A549 (cell line): ENCODE measurements at regions of chr5 and their contacts with region 1.

Region 1: DNA sequence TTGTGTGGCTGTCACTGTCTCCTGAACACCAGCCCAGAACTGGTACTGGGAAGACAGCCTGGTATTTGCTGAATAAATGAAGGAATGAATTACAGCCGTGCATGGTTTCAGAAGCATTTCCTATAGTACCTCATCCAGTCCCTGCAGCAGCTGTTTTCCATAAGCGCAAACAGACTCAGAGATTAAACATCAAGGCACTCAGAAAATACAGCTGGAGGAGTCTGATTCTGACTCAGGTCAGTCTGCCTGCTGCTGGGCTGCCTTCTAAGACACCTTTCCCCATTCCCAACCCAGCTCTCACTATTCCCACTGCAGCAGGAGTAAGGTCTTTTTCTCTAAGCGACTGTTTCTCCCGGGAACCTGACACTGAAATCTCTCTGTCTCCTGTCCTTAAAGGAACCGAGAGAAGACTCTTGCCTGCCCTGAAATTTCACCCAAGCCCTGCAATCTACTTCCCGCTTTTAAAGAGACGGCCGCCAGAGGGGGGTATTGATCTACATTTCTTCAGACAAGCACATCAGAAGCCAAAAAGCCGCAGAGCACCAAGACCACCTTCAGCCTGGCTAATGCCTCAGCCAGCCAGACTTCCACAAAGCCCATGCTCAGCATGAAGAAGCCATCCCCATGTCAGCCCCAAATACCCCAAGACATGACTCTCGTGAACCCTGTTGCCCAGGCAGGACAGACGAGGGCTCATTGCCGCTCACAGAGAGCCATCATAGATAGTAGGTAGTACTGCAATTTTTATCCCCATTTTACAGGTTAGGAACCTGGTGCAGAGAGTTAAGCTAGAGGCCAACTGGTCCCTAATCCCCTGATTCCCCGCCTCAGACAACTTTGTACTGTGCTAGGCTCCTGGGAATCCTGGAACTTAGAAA is 5.4 kb upstream of the FOXI1 start:
- DNase-seq: peak; percentile 54 to 78
- ATAC-seq: peak; percentile 80 to 90
- H3K4me3 ChIP-seq: no peak overlapping the region
- H3K27ac ChIP-seq: peak overlapping the region in 1 of 2 experiments; percentile 67; a peak in 3 of 6 replicates
- H3K4me1 ChIP-seq: peaks cover 7% of the 10 kb centered on the region; the same call in 1 of the 3 replicates
- CTCF ChIP-seq: peak; percentile 89
- EP300 ChIP-seq: no peak
- POLR2A ChIP-seq: no peak
- RAD21 ChIP-seq: peak; percentile 95 to 98

Region 2: GRCh38 chr5:169956756-169957155 is 143.5 kb before region 1 on chr5:
- CTCF ChIA-PET with region 1: no interaction called
- POLR2A ChIA-PET with region 1: no interaction called
- DNase-seq: no peak
- ATAC-seq: no peak
- H3K4me3 ChIP-seq: no peak overlapping the region
- H3K27ac ChIP-seq: no peak overlapping the region
- H3K4me1 ChIP-seq: no peaks in the 10 kb centered on the region
- CTCF ChIP-seq: no peak
- EP300 ChIP-seq: no peak
- POLR2A ChIP-seq: no peak
- RAD21 ChIP-seq: no peak

Region 3: DNA sequence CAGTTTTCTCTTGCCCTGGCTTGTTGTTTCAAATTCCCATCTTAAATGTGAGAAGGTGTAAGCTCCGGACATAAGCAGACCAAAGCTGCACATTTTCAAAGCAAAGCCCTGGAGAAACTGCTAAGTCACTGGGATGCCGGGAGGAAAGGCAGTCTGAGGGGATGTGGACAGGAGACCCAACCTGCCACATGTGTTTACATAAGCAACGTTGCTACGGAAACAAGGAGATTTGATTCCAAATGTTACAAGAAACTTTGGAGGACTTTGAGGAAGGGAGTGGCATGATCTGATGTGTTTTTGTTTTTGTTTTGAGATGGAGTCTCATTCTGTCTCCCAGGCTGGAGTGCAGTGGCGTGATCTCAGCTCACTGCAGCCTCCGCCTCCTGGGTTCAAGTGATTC is 94.3 kb before region 1 on chr5:
- CTCF ChIA-PET with region 1: no interaction called
- POLR2A ChIA-PET with region 1: no interaction called
- DNase-seq: peak in 1 of 2 experiments; percentile 35
- ATAC-seq: no peak
- H3K4me3 ChIP-seq: no peak overlapping the region
- H3K27ac ChIP-seq: no peak overlapping the region
- H3K4me1 ChIP-seq: no peaks in the 10 kb centered on the region
- CTCF ChIP-seq: no peak
- EP300 ChIP-seq: no peak
- POLR2A ChIP-seq: no peak
- RAD21 ChIP-seq: no peak

Region 4: DNA sequence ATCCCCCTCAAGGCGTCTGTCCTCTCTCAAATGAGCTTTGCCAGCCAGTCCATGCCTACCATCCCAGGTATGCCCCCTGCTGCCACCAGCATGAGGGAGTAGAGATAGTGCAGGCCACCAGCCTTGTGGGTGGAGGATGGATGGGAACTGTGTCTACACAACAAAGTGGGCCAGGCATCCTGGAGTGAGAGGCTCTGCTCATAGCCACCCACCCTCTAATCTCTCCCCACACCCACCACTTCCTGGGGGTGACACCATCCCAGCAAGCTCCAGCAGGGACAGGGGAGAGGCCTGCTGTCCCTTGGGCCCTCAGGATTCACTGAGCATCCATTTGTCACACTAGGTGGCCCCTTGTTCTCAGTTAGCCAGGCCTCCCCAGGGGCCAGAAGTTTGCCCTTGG is 20.1 kb before region 1 on chr5:
- CTCF ChIA-PET with region 1: interaction called, 28 read pairs
- POLR2A ChIA-PET with region 1: no interaction called
- DNase-seq: no peak
- ATAC-seq: no peak
- H3K4me3 ChIP-seq: no peak overlapping the region
- H3K27ac ChIP-seq: no peak overlapping the region
- H3K4me1 ChIP-seq: no peaks in the 10 kb centered on the region
- CTCF ChIP-seq: no peak
- EP300 ChIP-seq: no peak
- POLR2A ChIP-seq: no peak
- RAD21 ChIP-seq: no peak

Region 5: GRCh38 chr5:170132269-170132975 is 32.1 kb after region 1 on chr5:
- CTCF ChIA-PET with region 1: interaction called, 16 read pairs
- POLR2A ChIA-PET with region 1: no interaction called
- DNase-seq: peak in 1 of 2 experiments; percentile 9
- ATAC-seq: no peak
- H3K4me3 ChIP-seq: no peak overlapping the region
- H3K27ac ChIP-seq: no peak overlapping the region; a peak in 1 of 6 replicates
- H3K4me1 ChIP-seq: peaks cover 5% of the 10 kb centered on the region; the same call in 1 of the 3 replicates
- CTCF ChIP-seq: no peak
- EP300 ChIP-seq: no peak
- POLR2A ChIP-seq: no peak
- RAD21 ChIP-seq: no peak

Region 6: GRCh38 chr5:170183816-170184687 is 83.7 kb after region 1 on chr5:
- CTCF ChIA-PET with region 1: interaction called, 691 read pairs
- POLR2A ChIA-PET with region 1: no interaction called
- DNase-seq: peak; percentile 62 to 66
- ATAC-seq: peak; percentile 95 to 99
- H3K4me3 ChIP-seq: no peak overlapping the region
- H3K27ac ChIP-seq: peak overlapping the region in 1 of 2 experiments; percentile 32; a peak in 2 of 6 replicates
- H3K4me1 ChIP-seq: no peaks in the 10 kb centered on the region; the same call in 2 of the 3 replicates
- CTCF ChIP-seq: peak; percentile 79
- EP300 ChIP-seq: no peak
- POLR2A ChIP-seq: no peak
- RAD21 ChIP-seq: peak; percentile 95 to 98

Region 7: GRCh38 chr5:170216266-170216864 is 116.1 kb after region 1 on chr5:
- CTCF ChIA-PET with region 1: interaction called, 75 read pairs
- POLR2A ChIA-PET with region 1: no interaction called
- DNase-seq: peak; percentile 73 to 77
- ATAC-seq: peak; percentile 81 to 92
- H3K4me3 ChIP-seq: no peak overlapping the region
- H3K27ac ChIP-seq: no peak overlapping the region
- H3K4me1 ChIP-seq: peaks cover 33% of the 10 kb centered on the region
- CTCF ChIP-seq: peak; percentile 84
- EP300 ChIP-seq: no peak
- POLR2A ChIP-seq: no peak
- RAD21 ChIP-seq: peak; percentile 94 to 99

Region 8: GRCh38 chr5:170273945-170274710 is 173.8 kb after region 1 on chr5:
- CTCF ChIA-PET with region 1: no interaction called
- POLR2A ChIA-PET with region 1: no interaction called
- DNase-seq: peak; percentile 27 to 60
- ATAC-seq: peak; percentile 65 to 83
- H3K4me3 ChIP-seq: no peak overlapping the region
- H3K27ac ChIP-seq: peak overlapping the region in 1 of 2 experiments; percentile 29; a peak in 1 of 6 replicates
- H3K4me1 ChIP-seq: peaks cover 12% of the 10 kb centered on the region; the same call in 2 of the 3 replicates
- CTCF ChIP-seq: peak; percentile 22; the same call in 1 of the 3 replicates
- EP300 ChIP-seq: no peak
- POLR2A ChIP-seq: no peak
- RAD21 ChIP-seq: peak; percentile 30 to 55; a peak in 3 of 5 replicates